ENCODE measurements at regions of chr1 and their contacts with region 1.

Region 1: DNA sequence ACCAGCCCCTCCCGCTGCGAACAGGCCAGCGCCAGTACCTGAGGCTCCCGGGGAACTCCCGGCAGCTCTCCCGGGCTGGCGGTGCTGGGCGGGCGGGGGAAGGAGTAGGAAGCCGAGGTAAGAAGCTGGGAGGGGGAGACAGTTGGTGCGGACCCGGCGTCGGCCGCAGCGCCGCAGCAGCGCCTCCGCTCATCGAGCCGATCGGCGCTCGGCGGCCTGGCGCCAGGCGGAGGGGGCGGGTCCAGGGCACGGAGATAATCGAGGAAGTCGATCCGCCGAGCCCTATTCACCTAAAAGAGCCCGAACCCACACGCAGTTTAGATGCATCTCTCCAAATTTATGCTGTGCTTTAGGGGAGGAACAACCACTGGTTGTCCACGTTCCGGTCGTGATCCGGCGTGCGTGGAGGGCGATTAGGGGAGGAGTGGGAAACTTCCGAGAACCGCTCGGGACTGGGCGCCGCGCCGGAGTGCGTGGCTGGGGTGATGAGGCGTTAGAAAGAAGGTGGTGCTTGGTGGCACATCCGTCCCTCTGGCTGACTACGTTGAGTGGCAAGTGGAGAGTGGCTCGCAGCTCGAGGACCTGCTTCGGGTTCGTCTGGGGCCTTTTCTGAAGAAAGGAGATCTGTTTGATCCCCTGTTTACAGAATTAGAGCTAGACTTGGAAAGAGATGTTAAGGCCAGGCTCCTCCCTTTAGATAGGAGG is at the start of gene VAMP4:
- DNase-seq: peak; percentile 90 to 94
- ATAC-seq: peak; percentile 88 to 91 (median 89)
- H3K4me3 ChIP-seq: peak within 1 kb of the TSS; percentile 79
- H3K27ac ChIP-seq: peak within 1 kb of the TSS; percentile 98
- H3K4me1 ChIP-seq: peaks cover 35% of the 10 kb centered on the region
- H3K27me3 ChIP-seq: no peaks in the 10 kb centered on the region
- CTCF ChIP-seq: no peak
- total RNA-seq, gene VAMP4: 5.7 to 10.3 (median 7.9) TPM

Region 2: GRCh38 chr1:171485375-171486047 is 256.5 kb before region 1 on chr1 and contains the start of gene PRRC2C:
- intact Hi-C with region 1: loop called in 1 of 2 experiments (anchors 5 kb)
- DNase-seq: peak; percentile 97 to 99
- ATAC-seq: peak; percentile 99 to 100 (median 100)
- H3K4me3 ChIP-seq: peak within 1 kb of the TSS; percentile 97
- H3K27ac ChIP-seq: peak within 1 kb of the TSS; percentile 99
- H3K4me1 ChIP-seq: peaks cover 38% of the 10 kb centered on the region
- H3K27me3 ChIP-seq: no peaks in the 10 kb centered on the region
- CTCF ChIP-seq: peak; percentile 83
- total RNA-seq, gene PRRC2C: 50.8 to 71.4 (median 65.8) TPM

Region 3: GRCh38 chr1:171674431-171675405 is 67.3 kb before region 1 on chr1:
- intact Hi-C with region 1: no loop called
- DNase-seq: no peak
- ATAC-seq: no peak
- H3K4me3 ChIP-seq: no peak overlapping the region
- H3K27ac ChIP-seq: no peak overlapping the region
- H3K4me1 ChIP-seq: peaks cover 8% of the 10 kb centered on the region
- H3K27me3 ChIP-seq: no peaks in the 10 kb centered on the region
- CTCF ChIP-seq: no peak

Region 4: GRCh38 chr1:171712341-171712740 is 29.7 kb before region 1 on chr1:
- intact Hi-C with region 1: no loop called
- DNase-seq: no peak
- ATAC-seq: no peak
- H3K4me3 ChIP-seq: no peak overlapping the region
- H3K27ac ChIP-seq: no peak overlapping the region
- H3K4me1 ChIP-seq: peaks cover 16% of the 10 kb centered on the region
- H3K27me3 ChIP-seq: no peaks in the 10 kb centered on the region
- CTCF ChIP-seq: no peak

Region 5: GRCh38 chr1:171781176-171781875 is 39.3 kb after region 1 on chr1 and contains the start of gene METTL13:
- intact Hi-C with region 1: loop called (anchors 2 to 5 kb)
- DNase-seq: peak; percentile 99
- ATAC-seq: peak; percentile 98 to 100 (median 99)
- H3K4me3 ChIP-seq: peak within 1 kb of the TSS; percentile 92
- H3K27ac ChIP-seq: peak within 1 kb of the TSS; percentile 91
- H3K4me1 ChIP-seq: peaks cover 26% of the 10 kb centered on the region
- H3K27me3 ChIP-seq: no peaks in the 10 kb centered on the region
- CTCF ChIP-seq: no peak
- total RNA-seq, gene METTL13: 19.0 to 26.8 (median 23.1) TPM

Measured in psoas muscle (tissue), 8 donors.